ENCODE measurements at regions of chr1 and their contacts with region 1.

Region 1: DNA sequence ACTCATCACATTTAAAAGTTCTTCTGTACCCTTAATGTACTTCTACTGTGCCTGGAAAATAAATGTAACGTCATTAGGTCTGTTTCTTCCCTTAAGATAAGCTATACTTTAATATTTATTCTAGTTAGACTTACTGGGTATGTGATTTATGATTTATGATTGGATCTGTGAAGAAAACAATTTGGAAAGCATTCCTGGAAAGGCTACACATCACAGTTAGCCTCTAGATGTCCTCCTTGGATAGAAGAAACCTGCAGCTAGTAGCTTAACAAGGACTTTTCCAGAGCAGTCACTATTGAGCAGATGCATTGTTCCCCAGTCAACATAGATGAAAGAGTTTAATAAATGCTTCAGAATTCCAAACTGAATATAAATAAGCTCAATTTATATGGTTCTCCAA is 22.2 kb upstream of the ABL2 start:
- DNase-seq: peak; percentile 67
- ATAC-seq: peak; percentile 88
- H3K4me3 ChIP-seq: no peak overlapping the region
- H3K27ac ChIP-seq: no peak overlapping the region
- H3K4me1 ChIP-seq: peaks cover 2% of the 10 kb centered on the region; the same call in 1 of the 2 replicates
- H3K27me3 ChIP-seq: no peaks in the 10 kb centered on the region
- CTCF ChIP-seq: peak; percentile 68
- POLR2A ChIP-seq: no peak
- RAD21 ChIP-seq: peak; percentile 73

Region 2: GRCh38 chr1:179586107-179586823 is 334.6 kb after region 1 on chr1:
- CTCF ChIA-PET with region 1: no interaction called
- POLR2A ChIA-PET with region 1: no interaction called
- dilution Hi-C with region 1: no loop called
- in situ Hi-C with region 1: loop called (anchors 25 kb)
- intact Hi-C with region 1: no loop called
- DNase-seq: no peak
- ATAC-seq: peak; percentile 83
- H3K4me3 ChIP-seq: no peak overlapping the region
- H3K27ac ChIP-seq: no peak overlapping the region
- H3K4me1 ChIP-seq: no peaks in the 10 kb centered on the region
- H3K27me3 ChIP-seq: peaks cover 24% of the 10 kb centered on the region
- CTCF ChIP-seq: 0 out of 2 replicates have a peak, but pooled peaks have one; percentile 27
- POLR2A ChIP-seq: no peak
- RAD21 ChIP-seq: no peak

Region 3: DNA sequence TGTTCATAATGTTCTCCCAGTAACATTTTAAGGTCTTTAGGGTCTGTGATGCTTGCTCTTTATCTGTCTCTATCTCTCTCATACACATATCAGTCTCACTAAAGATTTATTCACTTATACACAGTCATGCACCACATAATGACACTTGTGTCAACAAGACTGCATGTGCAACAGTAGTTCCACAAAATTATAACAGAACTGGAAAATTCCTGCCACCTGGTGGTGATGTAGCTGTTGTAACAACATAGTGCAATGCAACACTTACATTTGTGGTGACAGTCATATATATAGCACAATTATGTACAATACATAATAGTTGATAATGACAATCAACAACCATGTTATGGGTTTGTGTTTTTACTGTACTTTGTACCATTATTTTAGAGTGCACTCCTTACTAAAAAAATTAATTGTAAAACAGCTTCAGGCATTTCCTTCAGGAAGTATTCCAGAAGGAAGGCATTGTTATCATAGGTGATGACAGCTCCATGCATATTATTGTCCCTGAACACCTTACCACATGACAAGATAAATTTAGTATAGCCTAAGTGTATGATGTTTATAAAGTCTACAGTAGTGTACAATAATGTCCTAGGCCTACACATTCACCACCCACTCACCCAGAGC is 348.1 kb after region 1 on chr1:
- CTCF ChIA-PET with region 1: interaction called, 4 read pairs
- POLR2A ChIA-PET with region 1: no interaction called
- dilution Hi-C with region 1: no loop called
- in situ Hi-C with region 1: loop called (anchors 25 kb)
- intact Hi-C with region 1: loop called (anchors 5 kb)
- DNase-seq: peak; percentile 30
- ATAC-seq: peak; percentile 67
- H3K4me3 ChIP-seq: no peak overlapping the region
- H3K27ac ChIP-seq: no peak overlapping the region
- H3K4me1 ChIP-seq: no peaks in the 10 kb centered on the region
- H3K27me3 ChIP-seq: peaks cover 1% of the 10 kb centered on the region; the same call in 1 of the 2 replicates
- CTCF ChIP-seq: peak; percentile 40
- POLR2A ChIP-seq: no peak
- RAD21 ChIP-seq: peak; percentile 21; the same call in 1 of the 2 replicates

Measured in IMR-90 (cell line).